ENCODE measurements at regions of chr18 and their contacts with region 1.

Region 1: DNA sequence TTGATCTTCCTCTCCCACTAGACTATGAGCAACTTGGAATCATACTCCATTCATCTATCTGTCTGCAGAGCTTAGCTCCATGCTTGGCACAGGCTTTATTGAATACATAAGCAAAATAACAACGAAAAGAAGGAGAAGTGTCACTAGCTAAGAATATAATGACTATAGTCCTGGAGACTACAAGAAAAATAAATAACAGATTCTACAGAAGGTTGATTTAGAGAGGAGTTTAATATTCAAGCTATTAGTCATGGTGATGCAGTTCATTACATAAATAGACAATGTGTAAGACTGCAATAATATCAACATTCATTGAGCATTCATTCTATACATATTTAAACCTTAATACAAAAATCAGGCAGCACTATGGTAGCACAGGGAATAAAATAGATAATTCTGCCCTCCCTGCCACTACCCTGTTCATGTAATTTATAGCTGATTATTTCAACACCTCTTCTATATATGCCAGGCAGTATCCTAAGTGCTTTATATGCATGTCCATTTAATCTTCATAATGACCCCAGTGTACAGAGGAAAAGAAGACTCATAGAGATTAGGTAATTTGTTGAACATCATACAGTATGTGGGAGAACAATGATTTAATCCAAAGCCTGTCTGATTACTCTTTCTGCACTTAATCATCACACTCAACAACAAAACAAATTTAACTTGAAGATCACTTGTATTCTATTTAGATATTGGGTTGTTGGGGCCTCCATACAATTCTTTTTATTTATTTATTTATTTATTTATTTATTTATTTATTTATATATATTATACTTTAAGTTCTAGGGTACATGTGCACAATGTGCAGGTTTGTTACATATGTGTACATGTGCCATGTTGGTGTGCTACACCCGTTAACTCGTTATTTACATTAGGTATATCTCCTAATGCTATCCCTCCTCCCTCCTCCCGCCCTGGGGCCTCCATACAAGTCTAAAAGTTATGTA is 165.3 kb downstream of the RNF152 start:
- DNase-seq: no peak
- ATAC-seq: no peak

Region 2: GRCh38 chr18:61606759-61607158 is 120.8 kb before region 1 on chr18:
- intact Hi-C with region 1: no loop called
- DNase-seq: peak; percentile 89
- ATAC-seq: peak; percentile 95 to 97

Region 3: GRCh38 chr18:61651883-61652268 is 75.6 kb before region 1 on chr18:
- intact Hi-C with region 1: loop called in 1 of 2 experiments (anchors 10 kb)
- DNase-seq: no peak
- ATAC-seq: no peak

Measured in left cardiac atrium (tissue), 4 donors.